Lower leg skin (tissue), 4 donors: ENCODE measurements at regions of chr15 and their contacts with region 1.

Region 1: DNA sequence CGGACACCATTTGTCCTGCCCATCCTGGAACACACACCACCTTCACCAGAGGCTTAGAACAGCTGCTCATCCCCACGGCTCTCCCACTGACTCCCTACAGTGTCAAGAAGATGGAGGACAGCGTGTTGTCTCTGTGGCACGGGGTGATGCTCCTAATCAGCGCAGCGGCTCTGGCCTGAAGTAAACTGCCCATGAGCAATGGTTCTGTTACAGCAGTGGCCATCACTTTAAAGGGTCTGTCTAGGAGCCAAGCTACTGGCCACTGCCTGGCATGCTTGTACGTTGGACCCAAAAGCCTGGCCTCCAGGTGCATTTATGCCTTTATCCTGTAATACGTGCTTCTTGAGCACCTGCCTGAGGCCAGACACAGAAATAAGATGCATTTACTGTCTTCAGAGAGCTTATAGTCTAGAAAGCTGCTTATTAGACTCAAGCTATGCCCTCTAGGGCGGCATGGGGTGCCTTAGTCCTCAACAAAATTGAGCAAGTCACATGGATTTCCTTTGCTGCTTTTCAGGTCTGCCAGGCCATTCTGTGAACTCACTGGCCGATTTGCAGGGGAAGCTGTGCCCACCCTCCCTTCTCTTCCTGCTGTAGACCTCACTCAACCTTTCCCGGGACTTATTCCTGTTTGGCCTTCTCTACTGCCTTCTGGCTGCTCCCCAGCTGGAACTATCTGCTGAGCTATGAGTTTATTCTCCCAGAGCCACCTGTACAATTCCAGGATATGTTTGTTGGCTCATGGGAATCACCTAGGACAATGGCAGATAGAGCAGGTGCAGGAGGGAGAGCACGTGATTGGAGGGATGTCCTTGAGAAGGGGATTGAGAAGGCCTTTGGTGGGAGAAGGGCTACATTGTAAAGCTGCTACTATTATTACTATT is 51.9 kb downstream of the STARD5 start:
- DNase-seq: peak in 1 of 2 donors; percentile 62
- H3K4me3 ChIP-seq: no peak overlapping the region
- CTCF ChIP-seq: no peak
- POLR2A ChIP-seq: no peak

Region 2: GRCh38 chr15:81400640-81401236 is 128.7 kb after region 1 on chr15:
- intact Hi-C with region 1: loop called (anchors 2 kb)
- DNase-seq: no peak
- H3K4me3 ChIP-seq: no peak overlapping the region
- CTCF ChIP-seq: peak in 1 of 3 donors; percentile 31
- POLR2A ChIP-seq: no peak